Mammary epithelial cell (primary cell): ENCODE measurements at regions of chr7 and their contacts with region 1.

Region 1: GRCh38 chr7:101217388-101218235 is at the starts of genes PLOD3 and ZNHIT1:
- DNase-seq: peak; percentile 96
- H3K4me3 ChIP-seq: peak within 1 kb of the TSS; percentile 76 to 89 (median 78)
- H3K27ac ChIP-seq: peak within 1 kb of the TSS; percentile 89
- H3K4me1 ChIP-seq: peaks cover 19% of the 10 kb centered on the region
- H3K27me3 ChIP-seq: no peaks in the 10 kb centered on the region
- CTCF ChIP-seq: peak in 1 of 2 donors; percentile 23
- total RNA-seq, gene PLOD3: 84.9 to 133 TPM
- total RNA-seq, gene ZNHIT1: 61.3 to 70.2 TPM

Region 2: GRCh38 chr7:101232141-101232850 is 14.7 kb after region 1 on chr7:
- CTCF ChIA-PET with region 1: interaction called, 35 read pairs
- dilution Hi-C with region 1: no loop called
- in situ Hi-C with region 1: no loop called
- intact Hi-C with region 1: no loop called
- DNase-seq: peak; percentile 73
- H3K4me3 ChIP-seq: peak overlapping the region; percentile 42 to 56 (median 47)
- H3K27ac ChIP-seq: peak overlapping the region; percentile 39
- H3K4me1 ChIP-seq: peaks cover 11% of the 10 kb centered on the region
- H3K27me3 ChIP-seq: no peaks in the 10 kb centered on the region
- CTCF ChIP-seq: no peak

Region 3: GRCh38 chr7:101244375-101245146 is 26.9 kb after region 1 on chr7 and contains the start of gene FIS1:
- CTCF ChIA-PET with region 1: interaction called, 8 read pairs
- dilution Hi-C with region 1: no loop called
- in situ Hi-C with region 1: no loop called
- intact Hi-C with region 1: loop called (anchors 1 kb)
- DNase-seq: peak; percentile 89
- H3K4me3 ChIP-seq: peak within 1 kb of the TSS; percentile 85 to 93 (median 87)
- H3K27ac ChIP-seq: peak within 1 kb of the TSS; percentile 66
- H3K4me1 ChIP-seq: peaks cover 25% of the 10 kb centered on the region
- H3K27me3 ChIP-seq: no peaks in the 10 kb centered on the region
- CTCF ChIP-seq: peak; percentile 62 to 85
- total RNA-seq, gene FIS1: 106 to 160 TPM

Region 4: GRCh38 chr7:101258243-101258731 is 40.7 kb after region 1 on chr7:
- CTCF ChIA-PET with region 1: no interaction called
- dilution Hi-C with region 1: loop called (anchors 5 kb)
- in situ Hi-C with region 1: no loop called
- intact Hi-C with region 1: no loop called
- DNase-seq: no peak
- H3K4me3 ChIP-seq: no peak overlapping the region
- H3K27ac ChIP-seq: no peak overlapping the region
- H3K4me1 ChIP-seq: no peaks in the 10 kb centered on the region
- H3K27me3 ChIP-seq: no peaks in the 10 kb centered on the region
- CTCF ChIP-seq: no peak

Region 5: GRCh38 chr7:101273206-101273605 is 55.6 kb after region 1 on chr7:
- CTCF ChIA-PET with region 1: no interaction called
- dilution Hi-C with region 1: no loop called
- in situ Hi-C with region 1: no loop called
- intact Hi-C with region 1: no loop called
- DNase-seq: no peak
- H3K4me3 ChIP-seq: no peak overlapping the region
- H3K27ac ChIP-seq: no peak overlapping the region
- H3K4me1 ChIP-seq: no peaks in the 10 kb centered on the region
- H3K27me3 ChIP-seq: no peaks in the 10 kb centered on the region
- CTCF ChIP-seq: no peak

Region 6: DNA sequence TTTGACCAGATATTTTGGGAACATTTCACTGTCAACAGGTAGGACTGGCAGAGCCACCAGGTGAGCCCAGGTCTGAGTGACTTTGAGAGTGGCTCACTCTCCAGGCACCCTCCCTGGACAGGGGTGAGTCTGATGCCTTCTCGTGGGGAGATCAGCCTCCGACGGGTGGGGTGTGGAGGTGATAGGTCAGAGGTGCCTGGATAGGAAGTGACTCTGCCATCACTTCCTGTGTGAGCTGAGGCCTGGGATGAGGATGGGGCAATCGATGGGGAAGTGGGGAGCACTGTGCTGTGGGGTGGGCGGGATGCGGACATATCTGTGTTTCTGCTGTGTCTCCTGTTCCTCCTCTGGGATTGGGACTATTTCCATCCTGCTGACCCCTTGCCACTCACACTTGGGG is 69.4 kb after region 1 on chr7:
- CTCF ChIA-PET with region 1: no interaction called
- dilution Hi-C with region 1: no loop called
- in situ Hi-C with region 1: no loop called
- intact Hi-C with region 1: loop called (anchors 2 kb)
- DNase-seq: no peak
- H3K4me3 ChIP-seq: no peak overlapping the region
- H3K27ac ChIP-seq: no peak overlapping the region
- H3K4me1 ChIP-seq: no peaks in the 10 kb centered on the region
- H3K27me3 ChIP-seq: peaks cover 2% of the 10 kb centered on the region
- CTCF ChIP-seq: no peak